Activated B cell treated with CpG ODN at 0.5 μM for 24 hours (primary cell): ENCODE measurements at regions of chr10 and their contacts with region 1.

Region 1: DNA sequence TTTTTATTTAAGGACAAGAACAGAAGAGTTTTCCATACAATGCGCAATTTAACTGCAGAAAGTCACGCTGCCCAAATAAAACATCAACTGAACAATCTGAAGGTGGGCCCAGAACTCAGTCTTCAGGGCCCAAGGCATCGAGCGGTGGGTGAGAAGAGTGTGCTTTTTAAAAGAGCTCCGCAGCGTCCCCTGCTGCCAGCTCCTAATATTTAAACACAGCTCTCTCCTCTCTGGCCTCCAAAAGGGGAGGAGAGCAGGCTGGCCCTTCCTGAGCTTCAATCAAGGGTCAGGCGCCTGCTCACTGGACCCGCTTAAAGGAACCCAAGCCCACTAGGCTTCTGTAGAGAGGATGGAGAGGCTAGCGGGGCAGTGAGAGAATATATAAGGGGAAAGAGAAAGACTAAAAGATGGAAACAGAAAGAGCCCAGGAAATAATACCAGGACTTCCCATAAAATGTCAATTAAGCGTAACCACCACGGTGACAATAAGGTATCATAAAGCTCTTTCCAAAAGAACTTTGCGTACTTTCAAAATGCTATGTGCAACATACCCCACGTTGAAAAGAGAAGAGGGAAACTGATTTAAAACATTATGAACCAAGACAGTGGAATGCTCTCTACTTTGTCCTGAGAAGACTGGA is 2.8 kb downstream of the FAM53B start:
- DNase-seq: peak; percentile 67
- ATAC-seq: peak; percentile 54
- H3K4me3 Mint-ChIP-seq: peak overlapping the region; percentile 97
- H3K27ac Mint-ChIP-seq: peak overlapping the region; percentile 97
- H3K4me1 Mint-ChIP-seq: peaks cover 75% of the 10 kb centered on the region
- H3K27me3 Mint-ChIP-seq: no peaks in the 10 kb centered on the region
- CTCF ChIP-seq: peak; percentile 41

Region 2: GRCh38 chr10:124418726-124419501 is 322.5 kb before region 1 on chr10 and contains the start of gene OAT:
- CTCF ChIA-PET with region 1: no interaction called
- POLR2A ChIA-PET with region 1: no interaction called
- intact Hi-C with region 1: loop called (anchors 5 kb)
- DNase-seq: peak; percentile 92
- ATAC-seq: peak; percentile 97
- H3K4me3 Mint-ChIP-seq: peak within 1 kb of the TSS; percentile 82
- H3K27ac Mint-ChIP-seq: peak within 1 kb of the TSS; percentile 46
- H3K4me1 Mint-ChIP-seq: peaks cover 12% of the 10 kb centered on the region
- H3K27me3 Mint-ChIP-seq: peaks cover 19% of the 10 kb centered on the region
- CTCF ChIP-seq: no peak
- total RNA-seq, gene OAT: 19.6 and 20.1 TPM in 2 replicates

Region 3: DNA sequence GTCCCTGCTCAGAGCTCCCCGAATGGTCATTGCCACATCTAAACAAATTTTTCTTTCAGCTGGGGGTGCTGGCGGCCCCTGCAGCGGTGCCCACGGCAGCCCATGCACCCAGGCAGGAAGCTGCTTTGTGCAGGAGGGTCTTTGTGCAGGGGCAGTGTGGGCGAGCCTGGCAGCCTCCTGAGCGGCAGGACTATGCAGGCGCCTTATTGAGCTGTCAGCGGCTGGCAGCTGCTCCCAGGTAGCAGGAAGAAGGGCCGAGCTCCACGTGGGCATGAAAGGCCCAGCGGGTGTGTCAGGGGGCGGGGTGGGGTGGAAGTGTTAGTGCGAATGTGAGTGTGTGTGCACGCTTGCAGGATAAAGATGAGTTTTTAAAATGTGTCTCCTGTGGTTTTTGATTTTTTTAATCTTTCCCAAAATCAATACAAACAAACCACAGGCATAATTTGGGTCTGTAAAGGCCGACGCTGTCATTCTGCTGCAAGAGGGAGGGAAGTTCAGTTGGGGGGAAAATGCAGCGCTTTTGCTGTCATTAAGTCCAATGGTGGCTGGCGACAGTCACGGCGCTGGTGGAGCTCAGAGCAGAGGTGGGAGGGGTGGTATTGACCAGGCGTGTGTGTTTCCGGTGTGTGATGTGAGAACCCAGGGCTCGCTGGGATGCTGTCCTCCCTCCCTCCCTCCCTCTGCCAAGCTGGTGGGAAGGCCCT is 195.9 kb before region 1 on chr10:
- CTCF ChIA-PET with region 1: interaction called, 307 read pairs
- POLR2A ChIA-PET with region 1: interaction called, 134 read pairs
- intact Hi-C with region 1: loop called (anchors 1 kb)
- DNase-seq: no peak
- ATAC-seq: peak; percentile 7
- H3K4me3 Mint-ChIP-seq: peak overlapping the region; percentile 62
- H3K27ac Mint-ChIP-seq: peak overlapping the region; percentile 77
- H3K4me1 Mint-ChIP-seq: peaks cover 93% of the 10 kb centered on the region
- H3K27me3 Mint-ChIP-seq: no peaks in the 10 kb centered on the region
- CTCF ChIP-seq: no peak

Region 4: DNA sequence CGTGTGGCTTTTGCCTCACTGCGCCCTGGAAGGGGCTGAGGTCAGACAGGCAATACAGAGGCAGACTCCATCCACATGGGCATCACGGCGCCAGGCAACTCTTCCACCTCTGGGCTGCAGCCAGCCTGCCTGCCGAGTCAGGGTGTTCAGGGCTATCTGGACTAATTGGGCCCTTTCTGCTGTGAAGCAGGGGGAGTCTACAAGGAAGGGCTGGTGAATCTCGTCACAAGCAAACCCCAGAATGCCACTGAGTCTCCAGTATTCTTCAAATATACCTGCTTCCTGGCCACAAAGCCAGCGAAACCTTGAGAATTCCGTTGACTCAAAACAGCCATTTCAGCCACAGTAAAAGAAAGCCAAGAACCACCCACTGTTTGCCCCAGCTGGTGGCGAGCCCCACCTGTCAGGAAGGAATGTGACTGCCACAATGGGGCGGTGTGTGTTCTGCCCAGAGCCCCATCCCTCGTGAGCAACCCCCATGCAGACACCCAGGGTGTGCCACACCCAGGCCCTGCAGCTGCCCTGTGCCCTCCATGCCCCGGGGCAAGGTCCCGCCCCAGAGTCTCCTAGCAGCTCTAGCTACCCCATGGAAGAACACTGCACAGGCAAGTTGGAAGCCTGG is 114.5 kb before region 1 on chr10:
- CTCF ChIA-PET with region 1: interaction called, 40 read pairs
- POLR2A ChIA-PET with region 1: interaction called, 63 read pairs
- intact Hi-C with region 1: no loop called
- DNase-seq: no peak
- ATAC-seq: peak; percentile 63
- H3K4me3 Mint-ChIP-seq: peak overlapping the region; percentile 46
- H3K27ac Mint-ChIP-seq: peak overlapping the region; percentile 95
- H3K4me1 Mint-ChIP-seq: peaks cover 99% of the 10 kb centered on the region
- H3K27me3 Mint-ChIP-seq: no peaks in the 10 kb centered on the region
- CTCF ChIP-seq: no peak

Region 5: GRCh38 chr10:124683814-124684213 is 57.6 kb before region 1 on chr10:
- CTCF ChIA-PET with region 1: interaction called, 43 read pairs
- POLR2A ChIA-PET with region 1: interaction called, 25 read pairs
- intact Hi-C with region 1: loop called (anchors 1 kb)
- DNase-seq: no peak
- ATAC-seq: no peak
- H3K4me3 Mint-ChIP-seq: peak overlapping the region; percentile 73
- H3K27ac Mint-ChIP-seq: peak overlapping the region; percentile 91
- H3K4me1 Mint-ChIP-seq: peaks cover 80% of the 10 kb centered on the region
- H3K27me3 Mint-ChIP-seq: no peaks in the 10 kb centered on the region
- CTCF ChIP-seq: no peak

Region 6: DNA sequence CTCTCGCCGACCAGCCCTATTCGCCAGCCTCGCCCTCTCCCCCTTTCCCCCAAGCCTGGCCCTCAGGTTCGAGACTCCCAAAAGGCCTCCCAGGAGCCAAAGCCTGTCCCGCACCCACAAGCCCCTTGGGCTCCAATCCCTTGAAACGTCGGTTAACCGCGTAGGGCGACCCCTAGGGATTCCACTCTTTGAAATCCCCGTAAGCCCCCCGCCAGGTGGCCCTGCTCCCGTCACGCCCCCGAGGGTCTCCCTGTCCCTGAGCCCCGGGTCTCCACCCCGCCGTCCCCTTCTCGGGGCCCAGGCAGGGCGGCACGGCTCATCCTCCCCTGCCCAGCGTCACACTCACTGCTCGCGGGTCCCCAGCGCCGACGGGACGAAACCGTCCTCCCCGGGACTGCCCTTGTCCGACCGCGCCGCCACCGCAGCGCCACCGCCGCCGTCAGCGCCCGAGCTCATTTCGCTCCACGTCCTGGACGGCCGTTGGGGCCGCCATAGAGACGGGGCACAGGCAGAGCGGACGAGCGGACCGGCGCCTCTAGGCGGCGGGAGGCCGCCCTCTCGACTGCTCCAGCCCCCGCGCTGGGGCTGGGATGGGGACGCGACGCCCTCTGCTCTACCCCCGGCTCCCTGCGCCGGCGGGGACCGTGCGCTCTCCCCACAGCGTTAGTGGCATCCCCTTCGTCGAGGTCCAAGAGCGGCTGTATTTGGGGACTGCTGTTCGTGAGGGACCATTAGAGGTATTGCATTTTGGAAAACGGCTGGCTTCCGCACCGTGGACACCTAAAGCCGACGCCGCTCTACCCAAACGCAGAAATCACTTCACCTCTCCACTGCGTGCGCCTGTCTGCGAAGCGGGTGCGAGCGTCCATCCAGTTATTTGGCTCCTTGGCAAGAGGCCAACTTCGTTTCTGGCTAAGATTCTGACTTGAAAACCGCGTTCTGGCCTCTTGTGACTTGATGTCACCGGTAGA is 50.3 kb after region 1 on chr10 and contains the start of gene EEF1AKMT2:
- CTCF ChIA-PET with region 1: no interaction called
- POLR2A ChIA-PET with region 1: interaction called, 4 read pairs
- intact Hi-C with region 1: loop called (anchors 1 kb)
- DNase-seq: peak; percentile 85
- ATAC-seq: peak; percentile 95
- H3K4me3 Mint-ChIP-seq: peak within 1 kb of the TSS; percentile 96
- H3K27ac Mint-ChIP-seq: peak within 1 kb of the TSS; percentile 91
- H3K4me1 Mint-ChIP-seq: peaks cover 25% of the 10 kb centered on the region
- H3K27me3 Mint-ChIP-seq: no peaks in the 10 kb centered on the region
- CTCF ChIP-seq: no peak
- total RNA-seq, gene EEF1AKMT2: 16.5 and 17.0 TPM in 2 replicates

Region 7: DNA sequence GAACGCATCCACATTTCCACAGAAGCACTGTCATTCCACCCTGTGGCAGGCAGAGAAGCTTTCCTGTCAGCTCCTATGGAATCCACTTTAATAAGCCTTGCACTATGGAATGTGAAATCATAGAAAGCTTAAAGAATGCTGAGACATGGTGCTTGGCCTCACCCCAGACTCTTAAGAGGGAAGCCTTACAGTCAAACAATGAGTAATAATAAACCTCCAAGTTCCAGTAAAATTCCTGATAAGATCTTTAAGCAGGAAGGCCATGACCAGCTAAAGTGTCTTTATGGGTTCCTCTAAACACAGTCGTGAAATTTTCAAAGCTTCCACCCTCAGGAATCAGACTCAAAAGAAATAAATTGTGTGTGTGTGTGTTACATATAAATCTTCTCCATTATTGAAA is 953.5 kb after region 1 on chr10:
- CTCF ChIA-PET with region 1: no interaction called
- POLR2A ChIA-PET with region 1: no interaction called
- intact Hi-C with region 1: no loop called
- DNase-seq: no peak
- ATAC-seq: no peak
- H3K4me3 Mint-ChIP-seq: no peak overlapping the region
- H3K27ac Mint-ChIP-seq: no peak overlapping the region
- H3K4me1 Mint-ChIP-seq: no peaks in the 10 kb centered on the region
- H3K27me3 Mint-ChIP-seq: peaks cover 8% of the 10 kb centered on the region
- CTCF ChIP-seq: no peak